OCI-LY7 (cell line): ENCODE measurements at regions of chr13 and their contacts with region 1.

Region 1: DNA sequence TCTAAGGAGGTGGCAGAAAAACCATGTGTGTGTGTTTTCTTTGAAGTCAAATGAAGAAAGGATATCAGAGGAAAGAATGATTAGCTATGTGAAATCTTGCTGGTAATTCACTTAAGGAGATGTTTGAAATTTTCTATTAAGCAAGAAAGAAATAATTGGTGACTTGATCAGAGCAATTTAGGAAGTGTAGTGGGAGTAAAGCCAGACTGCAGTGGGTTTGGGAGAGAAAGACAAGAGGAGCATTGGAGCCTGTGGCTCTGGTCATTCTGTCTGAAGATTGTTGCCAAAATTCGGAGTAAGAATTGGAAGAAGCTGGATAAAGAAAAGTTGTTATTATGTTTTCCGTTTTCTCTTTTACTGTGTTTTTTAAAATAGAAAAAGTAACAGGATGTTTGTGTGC is 640.5 kb downstream of the GPC5 start:
- DNase-seq: no peak
- H3K4me3 ChIP-seq: no peak overlapping the region
- H3K27ac ChIP-seq: no peak overlapping the region
- H3K4me1 ChIP-seq: no peaks in the 10 kb centered on the region
- CTCF ChIP-seq: no peak

Region 2: DNA sequence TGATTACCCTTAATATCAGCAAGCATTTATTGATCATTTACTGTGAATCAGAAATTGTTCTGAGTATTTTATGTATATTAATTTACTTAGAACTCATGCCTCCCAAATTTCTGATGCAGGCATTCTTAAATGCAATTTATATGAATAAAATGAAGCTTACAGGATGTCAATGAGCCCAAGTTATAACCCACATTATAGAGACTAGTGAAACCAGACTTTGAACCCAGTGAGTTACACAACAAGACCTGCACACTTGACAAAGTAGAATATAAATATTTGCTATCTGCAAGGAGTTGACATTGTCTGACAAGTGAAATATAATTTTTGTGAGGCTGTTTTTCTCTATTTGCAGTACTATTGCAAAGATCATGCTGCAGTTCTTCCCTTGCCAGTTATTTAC is 15.5 kb after region 1 on chr13:
- CTCF ChIA-PET with region 1: no interaction called
- POLR2A ChIA-PET with region 1: interaction called, 17 read pairs
- intact Hi-C with region 1: no loop called
- DNase-seq: no peak
- H3K4me3 ChIP-seq: no peak overlapping the region
- H3K27ac ChIP-seq: no peak overlapping the region
- H3K4me1 ChIP-seq: no peaks in the 10 kb centered on the region
- CTCF ChIP-seq: no peak

Region 3: DNA sequence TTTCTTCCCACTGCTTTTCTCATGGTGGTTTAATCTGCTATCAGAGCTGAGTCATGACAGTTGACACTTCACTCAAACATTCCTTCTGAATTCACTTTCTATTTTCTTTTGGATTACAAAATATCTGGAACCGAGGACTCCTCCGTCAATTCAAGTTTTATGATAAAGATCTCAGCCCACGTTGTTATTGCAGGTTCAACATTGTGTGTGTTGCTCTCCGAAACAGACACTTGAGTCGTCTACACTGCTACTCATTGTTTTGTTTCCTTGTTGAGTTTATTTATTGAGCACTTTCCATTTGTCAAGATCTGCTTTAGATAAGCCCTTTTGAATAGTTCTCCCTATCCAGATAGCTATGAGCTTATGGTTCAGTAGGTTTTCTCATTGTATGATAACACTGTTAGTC is 551.6 kb after region 1 on chr13:
- CTCF ChIA-PET with region 1: no interaction called
- POLR2A ChIA-PET with region 1: no interaction called
- intact Hi-C with region 1: no loop called
- DNase-seq: no peak
- H3K4me3 ChIP-seq: no peak overlapping the region
- H3K27ac ChIP-seq: no peak overlapping the region
- H3K4me1 ChIP-seq: no peaks in the 10 kb centered on the region
- CTCF ChIP-seq: no peak